Naive thymus-derived CD4-positive, alpha-beta T cell (primary cell): ENCODE measurements at regions of chr13 and their contacts with region 1.

Region 1: GRCh38 chr13:27283906-27284493 is 13.4 kb downstream of the RASL11A start:
- DNase-seq: no peak
- ATAC-seq: peak; percentile 54
- H3K4me3 ChIP-seq: no peak overlapping the region
- H3K4me3 Mint-ChIP-seq: no peak overlapping the region
- H3K27ac ChIP-seq: no peak overlapping the region
- H3K27ac Mint-ChIP-seq: peak overlapping the region in 1 of 9 donors; percentile 51
- H3K4me1 ChIP-seq: no peaks in the 10 kb centered on the region
- H3K4me1 Mint-ChIP-seq: peaks cover 0 to 11% (median 0%) of the 10 kb centered on the region in 7 donors
- H3K27me3 ChIP-seq: no peaks in the 10 kb centered on the region
- H3K27me3 Mint-ChIP-seq: no peaks in the 10 kb centered on the region

Region 2: DNA sequence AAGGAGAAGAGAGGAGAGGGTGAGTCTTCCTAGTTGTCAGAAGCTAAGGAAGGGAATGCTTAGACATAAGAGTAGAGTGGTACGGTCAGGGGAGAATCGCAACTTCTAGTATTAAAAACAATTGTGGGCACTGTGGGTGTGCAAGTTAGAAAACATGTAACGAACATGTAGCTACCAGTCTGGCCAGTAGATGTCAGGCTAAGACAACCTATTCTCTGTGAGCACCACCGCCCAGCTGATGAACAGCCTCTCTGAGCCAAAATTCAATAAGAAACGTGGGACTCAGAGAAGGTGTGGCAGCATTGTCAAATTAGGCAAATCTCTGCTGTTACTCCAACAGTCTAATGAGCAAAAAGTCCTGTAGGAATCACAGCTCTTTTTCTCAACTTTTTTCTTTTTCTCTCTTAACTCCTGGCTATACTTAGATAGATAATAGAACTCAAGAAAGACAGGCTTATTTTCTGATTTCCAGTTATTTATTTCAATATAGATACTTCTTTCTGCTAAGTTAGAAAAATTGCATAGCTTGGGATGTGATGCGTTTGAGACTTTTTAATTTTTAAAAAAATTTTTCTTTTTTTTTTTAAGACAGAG is 298.6 kb before region 1 on chr13:
- CTCF ChIA-PET with region 1: interaction called, 3 read pairs
- POLR2A ChIA-PET with region 1: no interaction called
- intact Hi-C with region 1: loop called (anchors 1 kb)
- DNase-seq: peak; percentile 17 to 76 (median 65)
- ATAC-seq: peak; percentile 83
- H3K4me3 ChIP-seq: no peak overlapping the region
- H3K4me3 Mint-ChIP-seq: no peak overlapping the region
- H3K27ac ChIP-seq: no peak overlapping the region
- H3K27ac Mint-ChIP-seq: peak overlapping the region in 1 of 9 donors; percentile 46
- H3K4me1 ChIP-seq: no peaks in the 10 kb centered on the region
- H3K4me1 Mint-ChIP-seq: peaks cover 0 to 10% (median 0%) of the 10 kb centered on the region in 7 donors
- H3K27me3 ChIP-seq: no peaks in the 10 kb centered on the region
- H3K27me3 Mint-ChIP-seq: peaks cover 3 to 17% (median 11%) of the 10 kb centered on the region in 5 donors

Region 3: DNA sequence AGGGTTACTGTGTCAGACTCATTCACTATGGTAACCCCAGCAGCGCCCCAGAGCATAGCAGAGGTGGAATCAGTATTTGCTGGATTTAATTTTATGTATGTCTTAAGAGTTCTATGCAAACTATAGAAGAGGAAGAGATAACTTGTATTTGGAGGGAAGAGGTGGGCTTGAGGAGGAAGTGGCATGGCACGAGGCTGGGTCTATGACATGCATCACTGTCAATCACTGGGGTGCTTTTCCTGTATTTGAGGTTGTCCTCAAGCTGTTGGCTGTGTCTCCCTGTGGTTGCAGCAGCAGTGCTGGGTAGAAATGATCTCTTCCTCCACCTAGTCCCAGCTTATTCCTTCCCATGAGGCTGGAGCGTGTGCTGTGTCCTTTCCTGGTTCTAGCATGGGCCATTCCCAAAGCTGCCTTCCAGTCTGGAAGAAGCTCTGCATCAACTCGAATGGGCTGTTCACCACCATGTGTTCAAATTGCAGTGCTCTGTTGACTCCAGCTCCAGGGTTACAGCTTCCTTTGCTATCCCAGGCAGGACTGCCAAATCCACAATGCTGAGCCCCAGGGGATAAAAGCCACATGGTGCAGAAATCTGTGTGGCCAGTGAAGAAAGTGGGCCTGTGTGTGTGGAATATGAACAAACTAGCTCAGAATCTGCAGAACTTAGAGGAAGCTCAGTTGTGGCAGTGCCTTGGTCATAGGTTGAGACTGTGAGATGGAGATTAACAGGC is 239.5 kb after region 1 on chr13:
- CTCF ChIA-PET with region 1: no interaction called
- POLR2A ChIA-PET with region 1: no interaction called
- intact Hi-C with region 1: no loop called
- DNase-seq: no peak
- ATAC-seq: no peak
- H3K4me3 ChIP-seq: no peak overlapping the region
- H3K4me3 Mint-ChIP-seq: no peak overlapping the region
- H3K27ac ChIP-seq: no peak overlapping the region
- H3K27ac Mint-ChIP-seq: no peak overlapping the region
- H3K4me1 ChIP-seq: no peaks in the 10 kb centered on the region
- H3K4me1 Mint-ChIP-seq: peaks cover 0 to 5% (median 0%) of the 10 kb centered on the region in 7 donors
- H3K27me3 ChIP-seq: no peaks in the 10 kb centered on the region
- H3K27me3 Mint-ChIP-seq: peaks cover 0 to 16% (median 15%) of the 10 kb centered on the region in 5 donors